Natural killer cell (primary cell): ENCODE measurements at regions of chr2 and their contacts with region 1.

Region 1: DNA sequence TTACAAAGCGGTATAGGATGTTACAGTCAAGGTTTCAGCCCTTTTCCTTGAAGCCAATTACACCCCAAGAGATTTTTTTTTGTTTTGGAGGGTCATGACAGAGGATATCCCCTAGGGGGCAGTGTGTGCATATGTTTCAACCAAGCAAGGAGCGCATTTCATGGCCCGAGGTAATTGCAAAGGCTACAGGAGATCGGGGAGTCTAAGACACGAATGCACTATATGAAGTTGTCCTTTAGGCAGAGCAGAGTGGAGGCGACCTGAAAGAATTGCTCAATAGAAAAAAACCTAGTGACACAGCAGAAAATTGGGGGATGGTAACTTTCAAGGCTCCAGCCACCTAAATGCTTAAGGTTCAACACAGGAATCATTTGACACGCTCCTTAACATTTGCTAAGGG is 219.8 kb upstream of the PARD3B start:
- DNase-seq: peak in 1 of 2 donors; percentile 80
- ATAC-seq: peak; percentile 59 to 78 (median 63)
- H3K4me3 ChIP-seq: no peak overlapping the region
- H3K4me3 Mint-ChIP-seq: no peak overlapping the region
- H3K27ac ChIP-seq: no peak overlapping the region
- H3K27ac Mint-ChIP-seq: no peak overlapping the region
- H3K4me1 ChIP-seq: no peaks in the 10 kb centered on the region
- H3K4me1 Mint-ChIP-seq: peaks cover 0 to 5% of the 10 kb centered on the region in 2 donors
- H3K27me3 ChIP-seq: no peaks in the 10 kb centered on the region
- H3K27me3 Mint-ChIP-seq: peaks cover 5 to 8% of the 10 kb centered on the region in 2 donors
- CTCF ChIP-seq: peak; percentile 82

Region 2: DNA sequence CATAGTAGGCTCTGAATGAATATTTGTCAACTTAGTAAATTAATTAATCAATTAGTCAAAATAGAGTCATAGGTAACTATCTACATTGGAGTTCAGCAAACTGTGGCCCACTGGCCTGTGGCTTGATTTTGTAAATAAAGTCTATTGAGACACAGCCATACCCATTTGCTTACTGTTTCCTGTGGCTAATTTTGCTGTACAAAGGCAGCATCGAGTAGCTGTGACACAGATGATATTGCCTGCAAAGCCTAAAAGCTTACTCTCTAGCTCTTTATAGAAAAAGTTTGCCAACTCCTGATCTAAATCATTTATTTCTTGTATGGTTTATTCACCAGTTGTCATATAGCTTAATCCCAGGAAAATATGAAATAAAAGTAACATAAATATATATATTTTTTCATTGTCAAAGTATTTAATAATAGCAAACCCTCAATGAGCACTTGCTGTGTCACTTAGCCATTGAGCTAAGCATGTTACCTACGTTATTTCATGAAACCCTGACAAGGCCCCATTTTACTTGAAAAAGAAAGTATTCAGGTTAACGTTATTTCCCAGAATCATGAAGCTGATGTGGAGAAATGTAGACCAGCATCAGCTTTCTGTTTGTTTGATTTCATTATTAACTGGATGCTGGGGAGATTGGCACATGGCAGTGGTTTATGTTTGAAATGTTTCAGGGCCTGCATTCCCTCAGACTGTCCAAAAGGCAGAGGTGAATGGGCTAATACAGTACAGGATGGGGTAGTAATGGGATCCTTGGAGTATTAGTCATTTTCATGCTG is 319.3 kb before region 1 on chr2:
- intact Hi-C with region 1: loop called (anchors 5 kb)
- DNase-seq: peak in 1 of 2 donors; percentile 33
- ATAC-seq: peak in 1 of 3 donors; percentile 35
- H3K4me3 ChIP-seq: no peak overlapping the region
- H3K4me3 Mint-ChIP-seq: no peak overlapping the region
- H3K27ac ChIP-seq: no peak overlapping the region
- H3K27ac Mint-ChIP-seq: no peak overlapping the region
- H3K4me1 ChIP-seq: peaks cover 2% of the 10 kb centered on the region
- H3K4me1 Mint-ChIP-seq: peaks cover 8 to 10% of the 10 kb centered on the region in 2 donors
- H3K27me3 ChIP-seq: no peaks in the 10 kb centered on the region
- H3K27me3 Mint-ChIP-seq: peaks cover 0 to 3% of the 10 kb centered on the region in 2 donors
- CTCF ChIP-seq: no peak

Region 3: DNA sequence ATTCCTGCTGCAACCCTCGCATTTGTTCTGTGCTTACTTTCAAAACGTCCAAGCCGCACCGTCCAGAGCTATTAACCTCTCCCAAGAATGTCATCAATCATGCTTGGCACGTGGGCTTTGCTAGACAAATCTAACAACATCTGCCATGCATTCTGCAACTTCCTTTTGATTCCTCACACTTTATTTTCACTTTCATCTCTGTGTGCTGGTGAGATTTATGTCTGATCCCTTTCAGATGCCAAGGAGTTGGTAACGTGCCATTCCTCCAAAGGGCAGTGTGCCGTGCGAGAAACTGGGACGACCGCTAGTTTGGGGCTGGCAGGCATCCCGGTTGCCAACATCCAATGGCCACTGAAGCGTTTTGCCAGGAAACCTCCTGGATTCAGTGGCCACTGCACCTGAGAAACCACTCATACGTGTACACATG is 10.2 kb before region 1 on chr2:
- intact Hi-C with region 1: no loop called
- DNase-seq: no peak
- ATAC-seq: no peak
- H3K4me3 ChIP-seq: no peak overlapping the region
- H3K4me3 Mint-ChIP-seq: no peak overlapping the region
- H3K27ac ChIP-seq: no peak overlapping the region
- H3K27ac Mint-ChIP-seq: no peak overlapping the region
- H3K4me1 ChIP-seq: no peaks in the 10 kb centered on the region
- H3K4me1 Mint-ChIP-seq: no peaks in the 10 kb centered on the region
- H3K27me3 ChIP-seq: no peaks in the 10 kb centered on the region
- H3K27me3 Mint-ChIP-seq: peaks cover 17 to 22% of the 10 kb centered on the region in 2 donors
- CTCF ChIP-seq: no peak

Region 4: DNA sequence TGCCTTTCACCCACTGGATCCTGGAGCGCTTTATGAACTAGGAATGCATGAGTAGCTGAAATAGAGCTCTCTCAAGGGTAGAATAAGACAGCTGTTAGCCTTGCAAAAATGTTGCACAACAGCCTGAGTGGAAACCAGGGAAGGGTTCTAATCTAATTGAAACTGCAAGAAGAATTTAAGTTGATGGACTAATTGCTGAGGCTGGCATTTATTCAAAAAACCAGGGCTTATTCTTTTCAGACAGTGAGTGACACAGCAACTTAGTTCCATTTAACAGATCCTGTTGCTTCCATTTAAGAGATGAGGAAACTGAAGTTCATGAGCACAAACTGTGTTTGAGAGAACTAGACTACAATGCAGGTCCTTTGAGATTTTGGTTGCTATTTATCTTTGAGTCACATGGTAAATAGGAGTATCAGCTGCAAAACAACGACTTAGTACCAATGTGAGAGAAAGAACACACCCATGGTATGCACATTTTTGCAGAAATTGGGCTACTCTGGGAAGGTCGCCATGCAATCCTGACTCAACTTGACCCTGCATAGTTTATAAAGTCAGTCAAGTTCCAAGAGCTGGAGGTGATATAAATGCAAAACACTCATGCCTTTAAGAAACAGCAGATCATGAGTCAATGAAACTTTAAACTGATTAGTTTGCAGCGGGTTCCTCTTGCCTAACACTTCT is 143.4 kb after region 1 on chr2:
- intact Hi-C with region 1: no loop called
- DNase-seq: no peak
- ATAC-seq: no peak
- H3K4me3 ChIP-seq: no peak overlapping the region
- H3K4me3 Mint-ChIP-seq: no peak overlapping the region
- H3K27ac ChIP-seq: no peak overlapping the region
- H3K27ac Mint-ChIP-seq: no peak overlapping the region
- H3K4me1 ChIP-seq: no peaks in the 10 kb centered on the region
- H3K4me1 Mint-ChIP-seq: no peaks in the 10 kb centered on the region
- H3K27me3 ChIP-seq: no peaks in the 10 kb centered on the region
- H3K27me3 Mint-ChIP-seq: no peaks in the 10 kb centered on the region
- CTCF ChIP-seq: no peak

Region 5: GRCh38 chr2:205675861-205676516 is 1350.5 kb after region 1 on chr2:
- intact Hi-C with region 1: loop called (anchors 5 kb)
- DNase-seq: peak in 1 of 2 donors; percentile 45
- ATAC-seq: no peak
- H3K4me3 ChIP-seq: no peak overlapping the region
- H3K4me3 Mint-ChIP-seq: no peak overlapping the region
- H3K27ac ChIP-seq: no peak overlapping the region
- H3K27ac Mint-ChIP-seq: no peak overlapping the region
- H3K4me1 ChIP-seq: no peaks in the 10 kb centered on the region
- H3K4me1 Mint-ChIP-seq: no peaks in the 10 kb centered on the region
- H3K27me3 ChIP-seq: peaks cover 7% of the 10 kb centered on the region
- H3K27me3 Mint-ChIP-seq: peaks cover 16 to 39% of the 10 kb centered on the region in 2 donors
- CTCF ChIP-seq: peak; percentile 28

Region 6: GRCh38 chr2:205885492-205886099 is 1560.1 kb after region 1 on chr2:
- intact Hi-C with region 1: loop called (anchors 5 kb)
- DNase-seq: peak; percentile 39 to 65
- ATAC-seq: peak in 1 of 3 donors; percentile 65
- H3K4me3 ChIP-seq: no peak overlapping the region
- H3K4me3 Mint-ChIP-seq: no peak overlapping the region
- H3K27ac ChIP-seq: no peak overlapping the region
- H3K27ac Mint-ChIP-seq: no peak overlapping the region
- H3K4me1 ChIP-seq: peaks cover 6% of the 10 kb centered on the region
- H3K4me1 Mint-ChIP-seq: peaks cover 6 to 16% of the 10 kb centered on the region in 2 donors
- H3K27me3 ChIP-seq: peaks cover 12% of the 10 kb centered on the region
- H3K27me3 Mint-ChIP-seq: peaks cover 27 to 38% of the 10 kb centered on the region in 2 donors
- CTCF ChIP-seq: peak; percentile 51

Region 7: DNA sequence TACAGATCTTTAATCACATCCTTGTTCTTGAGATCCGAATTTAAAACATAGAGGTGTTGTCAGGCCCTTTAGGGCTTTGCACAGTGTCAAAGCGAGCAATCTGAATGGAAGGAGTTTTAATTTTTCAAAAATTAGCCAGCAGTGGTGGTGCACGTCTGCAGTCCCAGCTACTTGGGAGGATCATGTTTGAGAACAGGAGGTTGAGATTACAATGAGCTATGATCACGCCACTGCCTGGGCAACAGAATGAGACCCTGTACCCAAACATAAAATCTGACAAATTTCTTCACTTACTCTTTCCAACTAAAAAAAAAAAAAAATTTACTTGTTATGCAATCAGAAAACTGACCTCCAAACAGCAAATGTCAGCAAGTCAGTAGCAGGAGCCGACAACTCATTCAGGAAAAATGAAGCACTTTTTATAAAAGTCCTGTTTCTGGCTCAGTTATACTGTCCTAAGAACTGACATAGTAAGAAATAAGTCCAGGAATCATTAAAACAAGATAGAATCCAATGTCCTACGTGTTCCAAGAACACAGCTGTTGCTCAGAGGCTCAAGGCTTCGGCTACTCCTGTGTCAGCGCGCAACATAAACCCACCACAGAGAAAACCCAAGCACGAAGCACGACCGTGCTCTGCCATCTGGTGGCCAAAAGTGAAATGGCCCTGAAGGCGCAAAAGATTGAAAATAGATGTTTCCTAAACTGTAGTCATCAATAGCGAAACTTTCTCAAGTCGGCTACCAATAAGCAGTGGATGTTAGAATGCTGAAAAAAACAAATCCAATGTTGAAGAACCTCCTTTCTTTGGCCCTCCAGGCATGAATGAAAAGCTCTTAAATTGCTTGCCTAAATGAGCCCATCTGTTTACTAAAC is 1622.4 kb after region 1 on chr2:
- intact Hi-C with region 1: loop called (anchors 1 kb)
- DNase-seq: peak; percentile 44 to 68
- ATAC-seq: peak; percentile 74 to 82 (median 79)
- H3K4me3 ChIP-seq: no peak overlapping the region
- H3K4me3 Mint-ChIP-seq: no peak overlapping the region
- H3K27ac ChIP-seq: no peak overlapping the region
- H3K27ac Mint-ChIP-seq: no peak overlapping the region
- H3K4me1 ChIP-seq: no peaks in the 10 kb centered on the region
- H3K4me1 Mint-ChIP-seq: peaks cover 10 to 12% of the 10 kb centered on the region in 2 donors
- H3K27me3 ChIP-seq: peaks cover 18% of the 10 kb centered on the region
- H3K27me3 Mint-ChIP-seq: peaks cover 27 to 52% of the 10 kb centered on the region in 2 donors
- CTCF ChIP-seq: peak; percentile 92